Sciatic nerve (tissue), 2 donors: ENCODE measurements at regions of chr16 and their contacts with region 1.

Region 1: DNA sequence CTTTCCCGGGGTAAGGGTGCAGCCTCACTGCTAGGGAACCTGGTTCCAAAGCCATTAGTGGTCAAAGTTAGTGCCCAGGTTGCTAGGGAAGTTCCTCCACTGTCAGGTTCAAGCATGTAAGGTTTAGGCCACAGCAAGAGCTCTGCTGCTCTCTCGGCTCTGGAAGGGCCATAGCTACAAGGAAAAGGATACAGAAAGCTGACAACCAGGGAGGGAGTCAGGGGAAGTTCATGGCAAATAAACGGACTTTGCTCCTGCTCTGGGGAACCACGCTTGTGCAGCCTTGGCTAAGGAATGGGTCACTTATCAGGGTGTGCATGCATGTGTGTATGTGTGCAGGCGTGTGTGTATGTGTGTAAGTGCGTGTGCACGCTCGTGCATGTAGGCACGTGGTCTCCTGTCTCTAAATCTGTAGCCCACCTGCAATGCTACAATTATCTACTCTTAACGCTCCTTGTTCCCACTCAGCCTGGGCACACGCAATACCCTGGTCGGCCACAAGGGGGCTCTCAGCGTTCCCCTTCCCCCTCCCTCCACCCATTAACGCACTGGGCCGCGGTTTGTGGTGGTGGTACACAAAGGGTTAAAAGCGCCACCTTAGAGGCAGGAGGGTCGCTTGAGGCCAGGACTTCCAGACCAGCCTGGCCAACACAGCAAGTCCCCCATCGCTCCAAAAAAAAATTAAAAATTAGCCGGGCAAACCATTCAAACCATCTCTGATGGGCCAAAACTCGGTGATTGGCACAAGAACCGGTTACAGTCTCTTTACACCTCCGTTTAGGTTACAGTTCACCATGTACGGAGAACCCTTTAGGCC is 48.4 kb upstream of the KDM8 start:
- DNase-seq: peak; percentile 83
- ATAC-seq: peak; percentile 73

Region 2: GRCh38 chr16:27455700-27456099 is 300.8 kb after region 1 on chr16:
- intact Hi-C with region 1: loop called (anchors 5 kb)
- DNase-seq: no peak
- ATAC-seq: no peak